ENCODE measurements at regions of chr1 and their contacts with region 1.

Region 1: DNA sequence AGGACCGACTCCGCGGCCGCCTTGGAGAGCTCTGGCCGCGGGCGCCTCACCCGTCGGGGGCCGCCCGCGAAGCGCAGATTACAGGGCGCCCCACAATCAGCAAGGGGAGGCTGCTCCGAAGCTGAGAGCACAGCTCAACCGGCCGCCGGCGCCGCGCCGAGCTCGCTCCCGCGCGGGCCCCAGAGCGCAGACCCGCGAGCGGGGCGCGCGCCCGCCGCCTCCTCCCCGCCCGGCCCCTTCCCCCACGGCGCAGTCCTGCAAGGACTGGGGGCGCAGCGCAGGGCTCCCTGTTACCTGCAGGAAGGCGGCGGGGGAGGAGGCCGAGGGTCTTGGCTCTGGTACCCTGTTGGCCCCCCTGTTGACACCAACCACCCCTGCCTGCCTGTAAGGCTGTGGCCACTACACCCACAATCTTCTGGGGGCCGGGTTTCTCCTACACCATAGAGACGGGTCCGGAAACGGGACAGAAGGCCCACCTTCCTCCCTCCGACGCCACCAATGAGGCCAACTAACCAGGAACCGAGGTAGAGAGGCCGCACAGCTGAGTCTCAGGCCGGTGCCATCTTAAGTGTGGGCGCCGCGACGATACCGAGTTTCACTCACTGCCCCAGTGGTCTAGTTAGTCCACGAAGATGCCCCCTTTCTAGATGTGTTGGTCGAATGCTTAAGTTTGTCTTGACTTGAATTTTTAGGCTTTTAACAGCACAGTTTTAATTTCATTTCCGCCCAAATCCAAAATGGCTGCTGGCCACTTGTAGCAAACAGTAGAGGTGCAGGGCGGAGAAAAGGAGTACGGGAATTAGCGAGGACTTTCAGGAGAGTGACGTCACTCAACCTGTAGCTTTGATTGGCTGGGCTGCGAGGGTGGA is at the start of gene SCYL3:
- DNase-seq: peak; percentile 82
- ATAC-seq: peak; percentile 87
- H3K4me3 Mint-ChIP-seq: peak within 1 kb of the TSS; percentile 88
- H3K27ac Mint-ChIP-seq: peak within 1 kb of the TSS; percentile 100
- H3K4me1 Mint-ChIP-seq: peaks cover 40% of the 10 kb centered on the region
- H3K27me3 Mint-ChIP-seq: peaks cover 4% of the 10 kb centered on the region
- CTCF ChIP-seq: no peak
- total RNA-seq, gene SCYL3: 14.5 and 16.2 TPM in 2 replicates

Region 2: DNA sequence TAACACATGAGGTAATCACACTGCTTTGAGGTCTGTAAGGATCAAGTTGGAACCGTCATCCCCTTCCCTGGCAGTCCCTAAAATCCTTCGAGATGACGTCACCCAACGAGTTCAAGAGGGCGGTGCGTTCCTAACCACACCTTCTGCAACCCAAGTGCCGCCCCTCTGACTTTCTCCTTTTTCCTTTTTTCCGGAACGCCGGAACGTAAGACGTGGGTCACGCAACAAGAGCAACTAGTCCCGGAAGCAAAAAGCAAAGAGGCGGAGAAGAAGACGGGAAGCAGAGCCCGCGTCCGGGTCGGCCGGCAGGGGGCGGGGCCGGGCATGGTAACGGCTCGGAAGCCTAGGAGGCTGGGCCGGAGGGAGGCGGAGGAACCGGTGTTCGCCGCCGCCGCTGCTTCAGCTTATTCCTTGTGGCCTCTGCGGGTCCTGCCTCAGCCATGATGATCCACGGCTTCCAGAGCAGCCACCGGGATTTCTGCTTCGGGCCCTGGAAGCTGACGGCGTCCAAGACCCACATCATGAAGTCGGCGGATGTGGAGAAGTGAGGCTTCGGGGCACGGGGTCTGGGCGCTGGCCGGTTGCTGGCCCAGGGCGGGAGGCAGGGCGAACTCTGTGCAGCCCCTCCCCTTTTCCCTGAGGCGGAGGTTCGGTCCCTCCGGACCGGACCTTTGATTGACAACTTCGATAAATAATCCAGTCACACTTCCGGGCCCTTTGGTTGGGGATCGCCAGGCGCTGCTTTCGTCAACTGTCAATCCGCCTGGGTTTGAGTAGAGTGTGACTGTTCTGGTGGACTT is 1714.9 kb before region 1 on chr1 and contains the start of gene TIPRL:
- CTCF ChIA-PET with region 1: no interaction called
- POLR2A ChIA-PET with region 1: no interaction called
- intact Hi-C with region 1: loop called (anchors 2 kb)
- DNase-seq: peak; percentile 92
- ATAC-seq: peak; percentile 88
- H3K4me3 Mint-ChIP-seq: no peak within 1 kb of the TSS
- H3K27ac Mint-ChIP-seq: no peak within 1 kb of the TSS
- H3K4me1 Mint-ChIP-seq: peaks cover 2% of the 10 kb centered on the region
- H3K27me3 Mint-ChIP-seq: peaks cover 8% of the 10 kb centered on the region
- CTCF ChIP-seq: no peak
- total RNA-seq, gene TIPRL: 25.5 and 29.8 TPM in 2 replicates

Region 3: GRCh38 chr1:168348146-168348709 is 1545.5 kb before region 1 on chr1:
- CTCF ChIA-PET with region 1: no interaction called
- POLR2A ChIA-PET with region 1: no interaction called
- intact Hi-C with region 1: loop called (anchors 5 kb)
- DNase-seq: no peak
- ATAC-seq: no peak
- H3K4me3 Mint-ChIP-seq: peak overlapping the region; percentile 89
- H3K27ac Mint-ChIP-seq: peak overlapping the region; percentile 84
- H3K4me1 Mint-ChIP-seq: peaks cover 10% of the 10 kb centered on the region
- H3K27me3 Mint-ChIP-seq: no peaks in the 10 kb centered on the region
- CTCF ChIP-seq: no peak

Region 4: GRCh38 chr1:169485544-169486278 is 408.0 kb before region 1 on chr1 and contains the start of gene SLC19A2:
- CTCF ChIA-PET with region 1: no interaction called
- POLR2A ChIA-PET with region 1: interaction called, 6 read pairs
- intact Hi-C with region 1: loop called (anchors 2 kb)
- DNase-seq: peak; percentile 86
- ATAC-seq: peak; percentile 98
- H3K4me3 Mint-ChIP-seq: peak within 1 kb of the TSS; percentile 88
- H3K27ac Mint-ChIP-seq: peak within 1 kb of the TSS; percentile 82
- H3K4me1 Mint-ChIP-seq: peaks cover 27% of the 10 kb centered on the region
- H3K27me3 Mint-ChIP-seq: no peaks in the 10 kb centered on the region
- CTCF ChIP-seq: no peak
- total RNA-seq, gene SLC19A2: 3.0 and 3.6 TPM in 2 replicates

Region 5: DNA sequence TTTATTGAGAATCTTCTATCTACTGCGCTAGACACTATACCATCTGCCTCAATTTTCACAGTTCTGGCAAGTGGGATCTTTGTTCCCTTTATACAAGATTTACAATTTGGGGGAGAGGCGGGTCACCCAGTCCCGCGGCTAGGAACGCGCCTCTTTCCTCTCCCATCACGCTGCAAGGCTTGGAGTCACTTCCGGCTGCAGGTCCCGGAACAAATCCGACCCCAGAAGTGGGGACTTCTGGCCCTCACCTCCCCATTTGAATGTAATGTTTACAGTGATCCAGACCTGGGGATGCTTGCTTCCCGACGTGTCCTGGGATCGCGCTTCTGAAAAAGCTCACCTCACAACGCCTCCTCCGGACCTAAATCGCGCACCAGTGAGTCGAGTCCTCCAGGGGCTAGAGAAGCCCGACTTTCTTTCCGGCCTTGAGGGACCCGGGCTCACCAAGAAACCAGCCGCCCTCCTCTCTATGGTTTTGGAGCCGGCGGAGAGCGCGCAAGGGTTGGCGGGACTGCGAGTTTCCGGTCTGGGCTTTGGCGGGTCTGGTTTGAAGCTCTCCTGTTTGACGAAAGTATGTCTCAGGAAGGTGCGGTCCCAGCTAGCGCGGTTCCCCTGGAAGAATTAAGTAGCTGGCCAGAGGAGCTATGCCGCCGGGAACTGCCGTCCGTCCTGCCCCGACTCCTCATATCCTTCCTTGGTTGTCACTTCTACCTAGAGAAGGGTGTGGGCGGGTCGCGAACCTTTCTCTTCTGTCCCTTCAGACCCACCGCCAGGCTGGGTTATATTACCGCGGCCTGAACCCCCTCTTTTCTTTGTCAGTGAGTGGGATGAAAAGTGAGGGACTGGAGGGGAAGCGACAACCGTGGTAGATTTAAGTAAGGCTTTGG is 99.0 kb before region 1 on chr1 and contains the start of gene METTL18:
- CTCF ChIA-PET with region 1: interaction called, 4 read pairs
- POLR2A ChIA-PET with region 1: interaction called, 22 read pairs
- intact Hi-C with region 1: loop called (anchors 1 kb)
- DNase-seq: peak; percentile 77
- ATAC-seq: peak; percentile 98
- H3K4me3 Mint-ChIP-seq: peak within 1 kb of the TSS; percentile 100
- H3K27ac Mint-ChIP-seq: peak within 1 kb of the TSS; percentile 99
- H3K4me1 Mint-ChIP-seq: peaks cover 50% of the 10 kb centered on the region
- H3K27me3 Mint-ChIP-seq: no peaks in the 10 kb centered on the region
- CTCF ChIP-seq: no peak
- total RNA-seq, gene METTL18: 12.0 and 14.5 TPM in 2 replicates

Region 6: DNA sequence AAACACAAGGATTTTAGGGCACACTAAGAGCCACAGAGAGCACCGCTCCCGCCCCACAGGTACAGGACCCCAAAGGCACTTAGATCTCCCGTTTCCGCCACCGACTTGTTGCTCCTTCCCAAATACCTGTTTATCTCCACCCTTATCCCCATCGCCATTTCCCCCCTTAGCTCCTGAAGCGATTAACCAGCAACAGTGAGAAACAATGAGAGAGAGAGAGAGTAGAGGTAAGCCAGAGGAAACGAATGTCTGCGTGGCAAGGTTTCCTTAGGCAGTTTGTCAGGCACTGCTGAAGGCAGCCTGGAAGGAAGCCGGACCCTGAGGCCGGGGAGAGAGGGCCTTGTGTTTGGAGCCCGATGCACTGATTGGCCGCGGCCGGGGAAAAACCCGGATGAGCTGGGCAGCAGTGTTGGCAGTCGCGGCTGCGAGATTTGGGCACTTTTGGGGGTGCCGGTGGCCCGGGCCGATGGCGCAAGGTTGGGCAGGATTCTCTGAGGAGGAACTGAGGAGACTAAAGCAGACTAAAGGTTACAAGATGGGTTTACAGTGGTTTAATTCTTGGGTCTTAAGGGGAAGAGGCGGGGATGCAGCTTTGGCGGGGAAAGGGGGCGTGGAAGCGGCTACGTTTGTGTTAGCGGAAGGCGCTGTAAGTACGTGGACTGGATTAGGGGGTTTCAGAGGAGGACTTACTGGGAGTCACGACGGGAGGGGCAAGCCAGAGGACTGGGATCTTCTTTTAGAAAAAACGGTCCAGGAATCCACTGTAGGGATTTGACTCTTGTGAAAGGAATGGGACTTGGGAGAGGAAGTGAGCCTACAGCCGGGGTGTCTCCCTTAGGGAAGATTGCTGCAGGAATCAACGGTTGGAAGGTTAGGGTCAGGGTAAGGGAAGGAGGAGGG is 638.3 kb after region 1 on chr1 and contains the start of gene GORAB:
- CTCF ChIA-PET with region 1: no interaction called
- POLR2A ChIA-PET with region 1: interaction called, 17 read pairs
- intact Hi-C with region 1: loop called (anchors 1 kb)
- DNase-seq: peak; percentile 77
- ATAC-seq: peak; percentile 98
- H3K4me3 Mint-ChIP-seq: no peak within 1 kb of the TSS
- H3K27ac Mint-ChIP-seq: no peak within 1 kb of the TSS
- H3K4me1 Mint-ChIP-seq: peaks cover 13% of the 10 kb centered on the region
- H3K27me3 Mint-ChIP-seq: peaks cover 4% of the 10 kb centered on the region
- CTCF ChIP-seq: no peak
- total RNA-seq, gene GORAB: 20.0 and 20.2 TPM in 2 replicates

Region 7: DNA sequence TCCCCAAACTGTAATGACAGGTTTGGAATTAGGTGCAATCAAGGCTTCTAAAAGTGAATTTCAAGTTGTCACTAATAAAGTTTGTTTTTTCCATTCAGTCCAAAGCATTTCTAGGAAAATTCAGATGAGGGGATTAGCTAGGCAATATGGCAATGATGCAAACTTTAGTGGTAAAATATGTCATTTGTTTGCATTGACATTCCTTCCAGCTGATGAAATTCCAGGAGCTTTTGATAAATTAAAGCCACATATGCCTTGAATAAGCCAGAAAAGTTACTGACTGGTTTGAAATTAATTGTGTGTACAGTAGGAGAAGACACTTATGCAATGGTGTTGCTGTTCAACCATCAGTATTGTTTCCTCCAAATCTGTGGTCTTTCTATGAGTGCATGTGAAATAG is 1099.4 kb after region 1 on chr1:
- CTCF ChIA-PET with region 1: no interaction called
- POLR2A ChIA-PET with region 1: no interaction called
- intact Hi-C with region 1: no loop called
- DNase-seq: no peak
- ATAC-seq: no peak
- H3K4me3 Mint-ChIP-seq: no peak overlapping the region
- H3K27ac Mint-ChIP-seq: no peak overlapping the region
- H3K4me1 Mint-ChIP-seq: no peaks in the 10 kb centered on the region
- H3K27me3 Mint-ChIP-seq: no peaks in the 10 kb centered on the region
- CTCF ChIP-seq: no peak